SK-MEL-5 (cell line): ENCODE measurements at regions of chrX and their contacts with region 1.

Region 1: GRCh38 chrX:33109858-33110257 is 101.5 kb downstream of the DMD start:
- DNase-seq: peak; percentile 21

Region 2: GRCh38 chrX:33171041-33171440 is 61.2 kb after region 1 on chrX:
- in situ Hi-C with region 1: loop called (anchors 10 kb)
- DNase-seq: no peak